Activated naive CD4-positive, alpha-beta T cell treated with anti-CD3 and anti-CD28 coated beads for 36 hours (primary cell): ENCODE measurements at regions of chr1 and their contacts with region 1.

Region 1: DNA sequence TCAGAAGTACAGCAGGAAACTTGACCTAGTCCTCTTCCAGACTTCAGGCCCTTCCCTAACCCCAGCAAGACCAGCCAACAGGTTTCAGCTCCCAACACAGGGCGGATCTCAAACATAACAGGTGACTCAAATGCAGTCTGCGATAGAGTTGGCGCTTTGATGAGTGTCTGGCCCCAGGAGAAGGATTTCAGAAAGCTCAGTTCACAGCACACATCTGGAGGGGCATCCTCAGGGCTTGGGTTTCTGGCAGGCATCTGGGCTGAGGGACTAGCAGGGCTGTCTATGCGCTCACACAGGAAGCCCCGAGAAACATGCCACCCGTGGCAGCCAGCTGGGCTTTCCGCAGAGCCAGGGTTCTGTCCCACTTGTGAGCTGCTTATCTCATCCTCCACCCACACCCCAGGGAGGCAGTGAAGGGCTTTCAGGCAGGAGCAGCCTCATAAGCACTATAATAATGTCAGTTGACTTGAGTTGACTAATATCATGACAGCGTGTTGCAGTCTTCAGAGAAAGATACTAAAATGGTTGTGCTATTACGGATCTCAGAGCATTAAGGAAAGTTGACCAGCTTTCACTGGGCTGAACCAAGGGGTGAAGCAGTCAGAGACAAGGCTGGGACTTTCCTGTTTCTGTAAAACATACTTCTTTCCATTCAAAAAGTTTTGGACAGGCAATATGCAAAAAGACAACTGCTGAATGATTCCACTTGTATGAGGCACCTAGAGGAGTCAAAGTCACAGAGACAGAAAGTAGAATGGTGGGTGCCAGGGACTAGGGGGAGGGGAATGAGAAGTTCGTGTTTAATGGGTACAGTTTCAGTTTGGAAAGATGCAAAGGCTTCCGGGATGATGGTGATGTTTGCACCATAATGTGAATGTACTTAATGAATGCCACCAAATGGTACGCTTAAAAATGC is 233.0 kb upstream of the IRF2BP2 start:
- DNase-seq: peak; percentile 95
- H3K4me3 Mint-ChIP-seq: peak overlapping the region; percentile 62
- H3K27ac Mint-ChIP-seq: peak overlapping the region; percentile 96
- H3K4me1 Mint-ChIP-seq: peaks cover 85% of the 10 kb centered on the region
- H3K27me3 Mint-ChIP-seq: no peaks in the 10 kb centered on the region

Region 2: DNA sequence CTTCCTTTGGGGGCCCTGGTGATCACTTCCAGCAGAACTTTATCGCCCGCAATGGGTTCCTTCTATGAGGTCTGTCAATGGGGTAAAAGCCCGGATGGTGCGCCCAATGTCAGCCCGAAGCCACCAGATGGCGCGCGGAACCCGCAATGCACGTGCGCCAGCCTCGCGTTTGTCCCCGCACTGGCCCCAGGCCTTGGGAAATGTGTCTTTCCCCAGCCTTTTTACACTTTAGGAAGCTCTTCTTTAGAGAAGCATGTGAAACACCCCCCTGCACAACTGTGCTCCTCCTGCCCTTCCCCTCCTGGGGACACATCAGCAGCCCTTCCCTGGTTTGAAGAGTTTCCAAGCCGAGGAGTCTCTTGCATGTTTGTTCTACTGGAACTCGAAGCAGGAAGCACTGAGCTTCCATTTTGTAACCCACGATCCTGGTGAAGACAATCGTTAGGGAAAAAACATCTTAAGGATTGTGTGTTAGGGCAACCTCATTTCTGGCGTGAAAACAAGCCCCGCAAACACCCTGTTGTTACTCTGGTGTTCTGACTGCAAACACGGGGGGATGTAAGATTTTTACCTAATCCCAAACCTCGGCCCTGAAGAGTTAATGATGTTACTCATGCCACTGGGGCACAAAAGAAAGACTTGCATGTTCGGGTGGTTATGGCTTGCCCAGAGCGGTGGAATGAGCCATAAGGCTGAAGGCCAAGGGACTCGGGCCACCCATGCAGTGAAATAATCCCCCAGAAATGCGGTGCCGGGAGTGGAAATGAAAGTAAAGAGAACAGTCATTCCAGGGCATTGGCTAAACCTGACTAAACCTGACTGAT is 343.7 kb before region 1 on chr1:
- CTCF ChIA-PET with region 1: interaction called, 6 read pairs
- intact Hi-C with region 1: loop called (anchors 1 kb)
- DNase-seq: peak; percentile 92
- H3K4me3 Mint-ChIP-seq: no peak overlapping the region
- H3K27ac Mint-ChIP-seq: peak overlapping the region; percentile 82
- H3K4me1 Mint-ChIP-seq: peaks cover 64% of the 10 kb centered on the region
- H3K27me3 Mint-ChIP-seq: no peaks in the 10 kb centered on the region

Region 3: DNA sequence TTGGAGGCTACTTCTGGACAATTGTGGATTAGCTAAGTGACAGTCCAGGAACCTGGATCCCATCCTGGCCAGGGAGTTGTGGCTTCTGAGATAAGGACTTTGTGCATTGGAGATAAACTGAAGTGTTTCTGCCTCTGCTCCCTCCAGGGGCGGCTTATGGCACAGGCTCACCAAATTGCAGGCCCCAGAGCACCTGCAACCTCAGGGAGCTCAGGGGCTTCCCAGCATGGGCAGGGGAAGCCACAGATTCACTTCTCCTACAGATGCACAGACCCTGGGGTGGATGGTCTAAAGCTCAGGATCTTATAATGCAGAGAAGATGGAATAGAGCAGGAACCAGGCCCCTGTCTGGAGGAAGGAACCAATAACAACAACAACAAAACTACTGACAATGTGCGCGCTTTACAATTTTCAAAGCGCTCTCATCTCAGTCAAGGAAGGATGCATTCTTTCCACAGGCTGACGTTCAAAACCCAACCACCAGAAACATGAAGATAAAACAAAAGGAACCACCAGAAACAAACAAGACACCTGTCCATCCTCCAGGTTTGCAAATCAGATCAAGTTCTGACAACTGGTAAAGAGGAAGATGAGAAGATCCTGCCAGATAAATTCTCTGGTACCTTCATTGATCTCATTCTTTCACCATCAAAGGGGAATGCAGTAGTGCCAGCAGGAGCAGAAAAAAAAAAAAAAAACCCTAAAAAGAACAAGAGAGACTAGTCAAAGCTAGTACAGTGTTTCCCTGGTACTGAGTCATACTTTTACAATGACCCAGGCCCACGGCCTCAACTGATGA is 112.0 kb before region 1 on chr1:
- CTCF ChIA-PET with region 1: no interaction called
- intact Hi-C with region 1: loop called (anchors 1 kb)
- DNase-seq: peak; percentile 83
- H3K4me3 Mint-ChIP-seq: peak overlapping the region; percentile 25
- H3K27ac Mint-ChIP-seq: peak overlapping the region; percentile 89
- H3K4me1 Mint-ChIP-seq: peaks cover 51% of the 10 kb centered on the region
- H3K27me3 Mint-ChIP-seq: no peaks in the 10 kb centered on the region

Region 4: DNA sequence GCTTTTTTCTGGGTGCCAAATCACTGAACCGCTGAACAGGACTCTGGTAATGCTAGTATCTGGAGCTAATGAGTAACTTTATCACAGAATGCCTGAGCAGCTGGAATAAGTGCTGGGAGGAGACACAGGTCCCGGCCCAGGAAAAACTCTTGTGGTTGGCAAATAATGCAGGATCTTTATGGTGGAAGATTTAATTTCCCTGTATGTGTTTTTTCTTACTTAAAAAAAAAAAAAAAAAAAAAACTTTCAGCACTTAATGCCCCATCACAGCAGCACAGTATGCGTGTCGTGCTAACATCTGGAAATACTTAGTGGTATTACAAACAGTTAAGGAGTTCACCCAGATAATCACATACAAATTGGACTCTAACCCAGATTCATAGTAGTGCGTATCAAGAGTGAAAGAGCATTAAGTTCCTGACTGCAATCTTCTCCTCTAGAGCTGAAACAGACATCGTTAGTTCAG is 65.0 kb after region 1 on chr1:
- CTCF ChIA-PET with region 1: no interaction called
- intact Hi-C with region 1: no loop called
- DNase-seq: no peak
- H3K4me3 Mint-ChIP-seq: no peak overlapping the region
- H3K27ac Mint-ChIP-seq: no peak overlapping the region
- H3K4me1 Mint-ChIP-seq: peaks cover 21% of the 10 kb centered on the region
- H3K27me3 Mint-ChIP-seq: no peaks in the 10 kb centered on the region

Region 5: GRCh38 chr1:234925440-234926263 is 82.7 kb after region 1 on chr1:
- CTCF ChIA-PET with region 1: interaction called, 6 read pairs
- intact Hi-C with region 1: loop called (anchors 1 kb)
- DNase-seq: peak; percentile 40
- H3K4me3 Mint-ChIP-seq: peak overlapping the region; percentile 39
- H3K27ac Mint-ChIP-seq: peak overlapping the region; percentile 75
- H3K4me1 Mint-ChIP-seq: peaks cover 50% of the 10 kb centered on the region
- H3K27me3 Mint-ChIP-seq: no peaks in the 10 kb centered on the region

Region 6: GRCh38 chr1:234978397-234979295 is 135.7 kb after region 1 on chr1:
- CTCF ChIA-PET with region 1: interaction called, 4 read pairs
- intact Hi-C with region 1: loop called (anchors 1 kb)
- DNase-seq: peak; percentile 81
- H3K4me3 Mint-ChIP-seq: peak overlapping the region; percentile 79
- H3K27ac Mint-ChIP-seq: peak overlapping the region; percentile 97
- H3K4me1 Mint-ChIP-seq: peaks cover 59% of the 10 kb centered on the region
- H3K27me3 Mint-ChIP-seq: no peaks in the 10 kb centered on the region